Breast epithelium (tissue), 4 donors: ENCODE measurements at regions of chr7 and their contacts with region 1.

Region 1: GRCh38 chr7:73851410-73852234 is 9.3 kb upstream of the METTL27 start:
- DNase-seq: no peak
- H3K4me3 ChIP-seq: peak overlapping the region in 1 of 3 donors; percentile 8
- H3K27ac ChIP-seq: peak overlapping the region; percentile 86 to 96
- H3K4me1 ChIP-seq: peaks cover 0 to 4% of the 10 kb centered on the region in 2 donors
- H3K27me3 ChIP-seq: no peaks in the 10 kb centered on the region
- CTCF ChIP-seq: no peak
- POLR2A ChIP-seq: no peak

Region 2: GRCh38 chr7:73623798-73624668 is 227.6 kb before region 1 on chr7 and contains the start of gene MLXIPL:
- intact Hi-C with region 1: loop called (anchors 10 kb)
- DNase-seq: peak; percentile 74 to 83
- H3K4me3 ChIP-seq: peak within 1 kb of the TSS; percentile 51 to 72 (median 64)
- H3K27ac ChIP-seq: no peak within 1 kb of the TSS
- H3K4me1 ChIP-seq: peaks cover 4 to 16% of the 10 kb centered on the region in 2 donors
- H3K27me3 ChIP-seq: peaks cover 11 to 39% of the 10 kb centered on the region in 2 donors
- CTCF ChIP-seq: no peak
- POLR2A ChIP-seq: no peak
- total RNA-seq, gene MLXIPL: 10.4 to 109 (median 21.3) TPM

Region 3: GRCh38 chr7:73769992-73770859 is 81.4 kb before region 1 on chr7 and contains the start of gene CLDN3:
- intact Hi-C with region 1: no loop called
- DNase-seq: peak; percentile 85 to 94
- H3K4me3 ChIP-seq: peak within 1 kb of the TSS in 2 of 3 donors; percentile 52 to 67
- H3K27ac ChIP-seq: peak within 1 kb of the TSS; percentile 85 to 94
- H3K4me1 ChIP-seq: peaks cover 0 to 2% of the 10 kb centered on the region in 2 donors
- H3K27me3 ChIP-seq: peaks cover 0 to 21% of the 10 kb centered on the region in 2 donors
- CTCF ChIP-seq: no peak
- POLR2A ChIP-seq: peak; percentile 57
- total RNA-seq, gene CLDN3: 81.6 to 137 TPM in 2 of 3 donors, not detected in the other

Region 4: DNA sequence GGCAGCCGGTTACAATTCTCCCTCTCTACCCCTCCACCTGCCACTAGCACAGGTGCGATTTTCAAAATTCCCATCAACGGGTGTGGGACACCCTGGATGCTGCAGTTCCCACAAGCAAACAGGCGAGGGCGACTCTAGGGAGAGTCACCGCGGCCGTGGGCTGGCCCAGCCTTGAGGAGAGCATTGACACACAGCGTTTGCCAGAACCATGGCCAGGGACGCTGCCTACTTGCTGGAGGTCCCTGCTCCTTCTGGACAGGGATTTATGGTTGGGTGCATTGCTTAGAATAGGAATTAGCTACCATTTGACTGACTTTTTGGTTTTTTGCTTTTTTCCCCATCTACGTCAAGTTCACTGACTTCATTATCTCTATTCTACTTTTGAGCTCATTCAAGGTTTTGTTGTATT is 39.9 kb before region 1 on chr7:
- intact Hi-C with region 1: loop called (anchors 2 kb)
- DNase-seq: peak; percentile 37 to 82
- H3K4me3 ChIP-seq: no peak overlapping the region
- H3K27ac ChIP-seq: no peak overlapping the region
- H3K4me1 ChIP-seq: no peaks in the 10 kb centered on the region
- H3K27me3 ChIP-seq: no peaks in the 10 kb centered on the region
- CTCF ChIP-seq: peak; percentile 38 to 80 (median 70)
- POLR2A ChIP-seq: no peak

Region 5: DNA sequence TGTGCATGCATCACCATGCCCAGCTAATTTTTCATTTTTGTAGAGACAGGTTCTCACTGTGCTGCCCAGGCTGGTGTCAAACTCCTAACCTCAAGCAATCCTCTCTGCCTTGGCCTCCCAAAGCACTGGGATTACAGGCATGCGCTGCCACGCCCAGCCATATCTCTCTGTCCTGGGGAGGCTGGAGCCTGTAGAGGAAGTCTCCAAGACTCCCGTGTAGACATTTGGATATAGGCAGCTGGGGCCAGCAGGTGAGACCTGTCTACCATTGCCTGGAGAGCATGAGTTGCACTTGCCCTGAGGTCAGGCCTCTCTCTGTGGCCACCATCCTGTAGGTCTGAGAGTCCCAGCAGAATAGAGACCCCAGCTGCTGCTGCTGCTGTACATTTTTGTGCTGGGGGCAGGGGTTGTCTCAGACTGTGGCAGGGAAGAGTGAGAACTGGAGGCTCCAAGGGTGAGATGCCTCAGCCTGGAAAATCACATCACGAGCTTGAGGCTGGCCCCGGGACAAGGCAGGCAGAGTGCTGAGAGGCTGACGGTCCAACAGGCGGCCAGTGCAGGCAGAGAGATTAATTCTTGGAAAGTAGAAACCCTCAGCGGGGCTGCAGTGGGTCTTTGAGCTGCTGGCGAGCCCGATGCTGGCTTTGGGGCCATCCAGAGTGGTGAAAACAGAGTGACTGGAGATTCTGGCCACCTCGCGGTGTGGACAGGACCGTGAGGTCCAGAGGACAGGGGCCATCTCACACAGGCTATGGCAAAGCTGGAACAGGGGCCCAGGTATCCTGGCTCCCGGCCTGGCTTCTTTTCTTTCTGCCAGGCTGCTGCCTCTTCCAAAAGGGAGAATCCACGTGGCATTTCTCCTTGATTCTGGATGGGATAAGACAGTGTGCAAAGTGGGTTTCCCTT is 70.3 kb after region 1 on chr7:
- intact Hi-C with region 1: no loop called
- DNase-seq: no peak
- H3K4me3 ChIP-seq: no peak overlapping the region
- H3K27ac ChIP-seq: no peak overlapping the region
- H3K4me1 ChIP-seq: no peaks in the 10 kb centered on the region
- H3K27me3 ChIP-seq: no peaks in the 10 kb centered on the region
- CTCF ChIP-seq: no peak
- POLR2A ChIP-seq: no peak